ENCODE measurements at regions of chr1 and their contacts with region 1.

Region 1: GRCh38 chr1:16984717-16985116 is 4.3 kb upstream of the MFAP2 start:
- DNase-seq: peak; percentile 85 to 87
- H3K4me3 ChIP-seq: no peak overlapping the region
- H3K27ac ChIP-seq: peak overlapping the region; percentile 25 to 46
- H3K4me1 ChIP-seq: peaks cover 0 to 19% (median 9%) of the 10 kb centered on the region in 4 donors
- H3K27me3 ChIP-seq: no peaks in the 10 kb centered on the region
- CTCF ChIP-seq: no peak

Region 2: GRCh38 chr1:16009030-16009709 is 975.5 kb before region 1 on chr1:
- intact Hi-C with region 1: no loop called
- DNase-seq: peak; percentile 74 to 87
- H3K4me3 ChIP-seq: no peak overlapping the region
- H3K27ac ChIP-seq: peak overlapping the region in 1 of 2 donors; percentile 7
- H3K4me1 ChIP-seq: peaks cover 0 to 24% (median 19%) of the 10 kb centered on the region in 4 donors
- H3K27me3 ChIP-seq: no peaks in the 10 kb centered on the region
- CTCF ChIP-seq: peak; percentile 97 to 99

Region 3: DNA sequence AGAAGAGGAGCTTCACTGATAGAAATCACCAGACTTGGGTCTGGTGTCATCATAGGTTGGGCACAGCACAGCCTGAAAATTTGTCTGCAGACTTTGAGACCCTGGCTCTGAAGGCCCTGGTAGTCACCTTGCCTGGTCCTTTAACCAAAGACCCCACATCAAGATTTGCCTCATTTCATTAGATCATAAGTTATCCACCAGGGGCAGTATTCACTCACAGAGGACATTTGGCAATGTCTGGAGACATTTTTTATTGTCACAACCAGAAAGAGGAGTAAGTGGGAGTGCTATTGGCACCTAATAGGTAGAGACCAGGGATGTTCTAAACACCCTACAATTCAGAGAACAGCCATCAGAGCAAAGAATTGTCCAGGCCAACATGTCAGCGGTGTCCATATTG is 1623.8 kb after region 1 on chr1:
- intact Hi-C with region 1: loop called (anchors 5 kb)
- DNase-seq: no peak
- H3K4me3 ChIP-seq: no peak overlapping the region
- H3K27ac ChIP-seq: no peak overlapping the region
- H3K4me1 ChIP-seq: no peaks in the 10 kb centered on the region
- H3K27me3 ChIP-seq: peaks cover 0 to 71% of the 10 kb centered on the region in 2 donors
- CTCF ChIP-seq: no peak